Mucosa of descending colon (tissue), 3 donors: ENCODE measurements at regions of chr19 and their contacts with region 1.

Region 1: DNA sequence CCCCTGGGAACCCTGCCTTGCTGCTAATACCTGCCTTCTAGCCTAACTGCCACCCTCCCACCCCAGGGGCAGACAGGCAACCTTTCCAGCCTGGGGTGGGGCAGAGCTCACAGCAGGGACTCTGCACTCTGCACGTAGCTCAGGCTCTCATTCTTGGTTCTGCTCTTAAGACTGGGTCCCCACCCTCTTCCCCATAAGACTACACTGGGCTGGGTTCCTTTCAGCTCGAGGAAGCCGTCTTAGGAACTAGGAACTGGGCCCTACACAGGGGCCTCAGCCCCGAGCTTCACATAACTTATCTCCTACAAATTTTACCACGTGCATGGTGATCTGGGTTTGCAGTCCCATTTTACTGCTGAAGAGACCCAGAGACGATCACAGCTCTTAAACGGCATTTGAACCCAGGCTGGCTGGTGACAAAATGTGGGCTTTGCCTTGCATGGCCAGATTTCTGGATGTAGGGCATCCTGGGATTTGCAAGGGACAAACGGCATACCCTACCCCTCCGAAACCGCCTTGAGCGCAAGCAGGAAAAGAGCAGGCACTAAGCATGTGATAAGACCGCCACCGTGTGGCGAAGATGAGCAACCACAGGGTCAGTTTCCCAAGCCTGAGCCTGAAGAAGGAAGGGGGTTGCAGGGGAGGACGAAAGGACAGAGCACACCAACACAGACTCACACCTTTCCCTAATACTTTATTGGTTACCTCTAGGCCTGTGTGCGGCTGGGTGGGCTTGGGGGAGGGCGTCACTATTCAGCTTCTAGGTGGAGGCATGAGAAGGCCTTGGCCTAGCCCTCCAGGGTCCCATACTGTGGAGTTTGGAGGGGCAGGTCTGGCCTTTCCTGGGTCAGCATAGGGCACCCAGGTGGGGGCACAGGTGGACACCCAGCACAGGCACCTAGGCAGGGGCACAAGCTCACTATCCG is 5.1 kb downstream of the JUNB start:
- DNase-seq: peak; percentile 78 to 79 (median 78)
- ATAC-seq: peak; percentile 43
- H3K4me3 ChIP-seq: no peak overlapping the region
- H3K4me1 ChIP-seq: peaks cover 28% of the 10 kb centered on the region
- CTCF ChIP-seq: peak; percentile 86

Region 2: DNA sequence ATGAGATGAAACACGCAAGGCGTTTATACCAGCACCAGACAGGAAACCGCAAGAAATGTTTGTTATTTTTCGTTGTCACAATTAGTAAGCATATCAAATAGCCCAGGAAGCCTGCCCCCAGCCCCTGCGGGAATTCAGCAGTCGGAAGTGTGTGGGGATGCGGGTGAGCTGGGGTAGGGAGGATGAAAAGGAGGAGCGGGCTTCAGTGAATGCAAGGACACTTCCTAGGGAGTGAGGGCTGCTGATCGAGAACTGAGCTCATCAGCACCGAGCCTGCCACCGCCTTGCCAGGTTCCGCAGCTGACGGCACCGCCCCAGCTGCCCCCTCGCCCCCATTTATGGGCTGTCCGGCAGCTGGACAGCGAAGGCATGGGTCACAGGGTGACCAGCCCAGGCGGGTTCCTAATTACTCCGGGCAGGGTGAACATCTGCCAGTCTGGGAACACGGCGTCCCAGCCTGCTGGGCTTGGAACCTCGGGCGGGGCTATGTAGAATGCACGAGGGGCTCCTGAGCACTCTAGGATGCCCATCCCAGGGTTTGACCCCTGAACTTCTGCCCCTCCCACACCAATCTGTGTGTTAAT is 46.4 kb before region 1 on chr19:
- intact Hi-C with region 1: no loop called
- DNase-seq: peak; percentile 42 to 81 (median 68)
- ATAC-seq: peak; percentile 78
- H3K4me3 ChIP-seq: no peak overlapping the region
- H3K4me1 ChIP-seq: peaks cover 13% of the 10 kb centered on the region
- CTCF ChIP-seq: no peak

Region 3: GRCh38 chr19:12777217-12778016 is 19.0 kb before region 1 on chr19:
- intact Hi-C with region 1: loop called in 1 of 2 experiments (anchors 2 kb)
- DNase-seq: peak; percentile 87 to 92 (median 88)
- ATAC-seq: peak; percentile 49
- H3K4me3 ChIP-seq: peak overlapping the region; percentile 24
- H3K4me1 ChIP-seq: peaks cover 38% of the 10 kb centered on the region
- CTCF ChIP-seq: peak; percentile 96